ENCODE measurements at regions of chr12 and their contacts with region 1.

Region 1: DNA sequence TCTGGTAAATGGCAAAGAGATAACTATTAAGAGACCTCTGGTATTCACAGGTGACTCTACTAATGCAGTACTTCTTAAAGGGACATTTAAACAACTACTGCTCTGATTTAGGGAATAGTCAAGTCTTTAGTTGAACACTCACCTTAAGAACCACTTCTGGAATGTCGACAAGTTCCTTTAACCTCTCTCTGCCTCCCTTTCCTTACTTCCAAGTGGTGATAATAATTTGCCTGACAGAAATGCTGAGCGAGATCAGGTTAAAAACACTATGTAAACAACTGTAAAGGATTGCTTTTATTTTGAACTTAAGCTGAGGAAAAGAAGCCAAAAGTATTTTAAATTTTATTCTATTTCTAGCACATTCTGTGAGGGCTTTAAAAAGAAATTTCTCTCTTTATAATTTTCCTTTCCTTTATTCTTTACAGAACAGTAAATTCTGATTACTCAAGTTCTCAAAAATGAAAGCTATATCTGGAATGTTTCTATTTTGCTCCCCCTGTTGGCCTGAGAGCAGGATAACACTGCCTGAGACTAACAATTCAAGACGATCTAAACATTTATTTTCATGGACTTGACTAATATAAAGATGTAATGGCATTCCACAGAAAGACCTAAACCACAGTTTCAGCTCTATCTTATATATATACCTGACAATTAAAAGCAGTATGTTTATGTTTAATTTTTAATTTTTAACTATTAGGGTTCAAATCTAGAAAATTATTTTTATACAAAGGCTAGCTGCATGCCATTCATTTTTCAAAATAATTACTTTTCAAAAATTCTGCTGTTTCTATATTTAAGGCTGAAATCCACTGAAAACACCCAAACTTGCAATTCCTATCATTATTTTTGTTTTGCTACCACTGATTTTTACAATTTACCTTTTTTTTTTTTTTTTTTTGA is 29.2 kb downstream of the ZCCHC8 start:
- DNase-seq: peak; percentile 22 to 84
- H3K4me3 ChIP-seq: no peak overlapping the region
- H3K27ac ChIP-seq: peak overlapping the region in 4 of 5 donors; percentile 46 to 80 (median 66)
- H3K4me1 ChIP-seq: peaks cover 5 to 13% (median 9%) of the 10 kb centered on the region in 4 donors
- H3K27me3 ChIP-seq: no peaks in the 10 kb centered on the region
- CTCF ChIP-seq: peak in 5 of 7 experiments; percentile 36 to 88 (median 75)
- EP300 ChIP-seq: no peak
- POLR2A ChIP-seq: no peak

Region 2: GRCh38 chr12:122399592-122400373 is 71.8 kb before region 1 on chr12:
- intact Hi-C with region 1: loop called (anchors 5 kb)
- DNase-seq: peak; percentile 75 to 89
- H3K4me3 ChIP-seq: peak overlapping the region in 2 of 4 donors; percentile 3 to 10
- H3K27ac ChIP-seq: peak overlapping the region; percentile 83 to 94 (median 92)
- H3K4me1 ChIP-seq: peaks cover 15 to 61% (median 39%) of the 10 kb centered on the region in 4 donors
- H3K27me3 ChIP-seq: no peaks in the 10 kb centered on the region
- CTCF ChIP-seq: peak in 5 of 7 experiments; percentile 39 to 84 (median 59)
- EP300 ChIP-seq: no peak
- POLR2A ChIP-seq: no peak

Measured in stomach (tissue), 19 donors.